Aorta (tissue), 5 donors: ENCODE measurements at regions of chr1 and their contacts with region 1.

Region 1: DNA sequence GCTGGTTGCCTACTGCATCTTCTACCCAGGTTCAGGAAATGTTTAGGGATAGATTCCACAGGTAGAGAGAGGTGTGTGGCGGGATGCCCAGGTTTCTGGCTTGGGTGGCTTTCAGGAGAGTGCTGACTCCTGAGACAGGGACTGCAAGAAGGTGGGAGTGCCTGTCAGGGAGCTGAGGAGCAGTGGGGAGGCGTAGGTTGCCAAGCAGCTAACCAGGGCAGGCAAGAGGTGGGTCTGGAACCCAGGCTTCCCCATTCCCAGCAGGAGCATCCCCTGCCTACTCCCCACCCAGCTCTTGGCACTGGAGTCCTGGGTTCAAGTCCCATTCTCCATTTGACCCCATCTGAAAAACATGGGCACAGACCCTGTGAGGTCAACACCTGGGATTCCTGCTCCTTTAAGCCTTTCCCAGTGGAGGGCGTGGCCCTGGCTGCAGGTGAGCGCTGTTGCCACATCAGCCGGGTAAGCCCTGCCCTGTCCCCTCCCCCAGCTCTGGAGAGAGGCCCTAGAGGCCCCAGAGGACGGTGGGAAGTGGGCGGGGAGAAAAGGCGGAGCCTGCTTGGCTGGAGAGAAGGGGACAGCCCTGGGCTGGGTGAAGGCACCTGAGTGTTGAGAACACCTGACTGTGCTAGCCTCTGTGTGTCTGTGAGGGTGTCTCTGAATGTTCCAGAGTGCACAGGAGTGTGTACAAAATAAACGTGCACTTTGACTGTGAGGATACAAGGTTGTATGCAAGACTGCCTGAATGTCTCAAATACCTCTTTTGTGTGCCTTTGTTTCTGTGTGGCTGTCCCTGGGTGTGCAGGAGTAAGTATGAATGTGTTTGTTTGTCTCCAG is 14.0 kb upstream of the SYNC start:
- DNase-seq: no peak
- ATAC-seq: no peak
- H3K4me3 ChIP-seq: no peak overlapping the region
- H3K27ac ChIP-seq: no peak overlapping the region
- H3K4me1 ChIP-seq: no peaks in the 10 kb centered on the region
- H3K27me3 ChIP-seq: no peaks in the 10 kb centered on the region

Region 2: GRCh38 chr1:32681509-32681908 is 35.0 kb before region 1 on chr1:
- intact Hi-C with region 1: no loop called
- DNase-seq: no peak
- ATAC-seq: peak; percentile 44
- H3K4me3 ChIP-seq: no peak overlapping the region
- H3K27ac ChIP-seq: no peak overlapping the region
- H3K4me1 ChIP-seq: peaks cover 0 to 2% of the 10 kb centered on the region in 2 donors
- H3K27me3 ChIP-seq: no peaks in the 10 kb centered on the region

Region 3: GRCh38 chr1:32754313-32755097 is 38.0 kb after region 1 on chr1:
- intact Hi-C with region 1: loop called in 1 of 2 experiments (anchors 5 kb)
- DNase-seq: no peak
- ATAC-seq: peak; percentile 33
- H3K4me3 ChIP-seq: peak overlapping the region; percentile 38 to 75
- H3K27ac ChIP-seq: peak overlapping the region in 1 of 2 donors; percentile 8
- H3K4me1 ChIP-seq: no peaks in the 10 kb centered on the region
- H3K27me3 ChIP-seq: no peaks in the 10 kb centered on the region

Region 4: DNA sequence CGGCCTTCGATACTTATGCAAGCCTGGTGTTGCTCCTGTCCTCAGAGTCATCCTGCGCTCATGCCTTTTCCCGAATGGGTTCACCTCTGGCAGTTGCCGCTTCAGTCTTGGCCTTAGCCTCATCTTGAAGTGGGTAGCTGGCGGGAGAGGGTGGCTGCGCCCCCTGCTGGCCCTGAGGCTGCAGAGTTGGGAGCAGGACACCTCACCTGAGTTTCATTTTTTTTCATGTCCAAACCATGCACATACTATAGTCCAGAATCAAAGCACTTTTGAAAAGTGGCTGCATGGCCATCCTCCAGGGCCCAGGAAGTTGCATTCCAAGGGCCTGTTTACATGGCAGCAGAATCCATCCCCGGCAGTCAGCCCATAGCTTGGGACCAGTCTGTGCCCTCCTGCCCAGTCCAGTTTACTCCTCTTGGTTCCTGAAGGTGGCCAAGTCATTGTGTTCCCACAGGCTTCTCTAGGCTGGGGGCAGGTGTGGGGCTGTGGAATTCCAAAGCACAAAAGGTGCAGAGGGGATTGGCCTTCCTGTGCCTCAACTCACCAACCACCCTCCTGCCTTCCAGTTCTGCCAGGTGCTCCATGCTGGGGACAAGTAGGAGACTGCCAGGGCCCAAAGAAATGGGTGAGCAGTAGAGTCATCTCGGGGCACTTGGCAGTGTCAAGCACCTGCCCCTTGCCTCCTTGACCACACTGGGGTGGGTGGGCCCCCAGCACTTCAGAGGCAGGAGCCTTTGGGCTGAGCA is 56.7 kb after region 1 on chr1:
- intact Hi-C with region 1: loop called (anchors 1 to 2 kb)
- DNase-seq: peak; percentile 83 to 92
- ATAC-seq: peak; percentile 88
- H3K4me3 ChIP-seq: no peak overlapping the region
- H3K27ac ChIP-seq: no peak overlapping the region
- H3K4me1 ChIP-seq: no peaks in the 10 kb centered on the region
- H3K27me3 ChIP-seq: no peaks in the 10 kb centered on the region